ENCODE measurements at regions of chr4 and their contacts with region 1.

Region 1: DNA sequence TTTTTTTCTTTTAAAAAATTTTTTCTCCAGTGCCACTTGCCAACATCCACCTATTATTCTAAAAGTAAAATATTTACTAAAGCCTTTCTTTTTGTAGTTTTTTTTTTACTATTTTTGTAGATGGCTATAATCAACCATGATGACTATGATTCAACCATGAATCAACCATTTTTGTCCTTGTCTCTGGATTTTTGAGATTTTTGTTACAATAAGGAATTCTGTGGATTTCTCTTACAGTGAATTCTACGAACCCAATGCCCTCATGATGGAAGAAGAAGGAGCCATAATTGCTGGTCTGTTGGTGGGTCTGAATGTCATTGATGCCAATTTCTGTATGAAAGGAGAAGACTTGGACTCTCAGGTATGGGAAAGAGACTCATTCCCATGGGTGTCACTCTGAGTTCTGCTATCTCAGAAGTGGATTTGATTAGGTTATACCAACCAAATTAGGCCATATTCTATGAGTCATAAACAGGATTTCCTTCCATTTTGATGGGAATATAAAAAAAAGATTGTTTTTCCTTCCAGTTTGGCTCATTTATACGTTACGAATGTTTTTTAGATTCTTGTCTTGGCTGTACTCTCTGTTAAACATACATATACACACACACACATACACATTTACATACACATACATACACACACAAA is 46.7 kb downstream of the RUFY3 start:
- DNase-seq: no peak
- H3K4me3 ChIP-seq: no peak overlapping the region
- H3K27ac ChIP-seq: peak overlapping the region in 1 of 5 donors; percentile 12
- H3K4me1 ChIP-seq: peaks cover 6 to 10% of the 10 kb centered on the region in 2 donors
- H3K27me3 ChIP-seq: no peaks in the 10 kb centered on the region
- CTCF ChIP-seq: no peak
- POLR2A ChIP-seq: no peak

Region 2: DNA sequence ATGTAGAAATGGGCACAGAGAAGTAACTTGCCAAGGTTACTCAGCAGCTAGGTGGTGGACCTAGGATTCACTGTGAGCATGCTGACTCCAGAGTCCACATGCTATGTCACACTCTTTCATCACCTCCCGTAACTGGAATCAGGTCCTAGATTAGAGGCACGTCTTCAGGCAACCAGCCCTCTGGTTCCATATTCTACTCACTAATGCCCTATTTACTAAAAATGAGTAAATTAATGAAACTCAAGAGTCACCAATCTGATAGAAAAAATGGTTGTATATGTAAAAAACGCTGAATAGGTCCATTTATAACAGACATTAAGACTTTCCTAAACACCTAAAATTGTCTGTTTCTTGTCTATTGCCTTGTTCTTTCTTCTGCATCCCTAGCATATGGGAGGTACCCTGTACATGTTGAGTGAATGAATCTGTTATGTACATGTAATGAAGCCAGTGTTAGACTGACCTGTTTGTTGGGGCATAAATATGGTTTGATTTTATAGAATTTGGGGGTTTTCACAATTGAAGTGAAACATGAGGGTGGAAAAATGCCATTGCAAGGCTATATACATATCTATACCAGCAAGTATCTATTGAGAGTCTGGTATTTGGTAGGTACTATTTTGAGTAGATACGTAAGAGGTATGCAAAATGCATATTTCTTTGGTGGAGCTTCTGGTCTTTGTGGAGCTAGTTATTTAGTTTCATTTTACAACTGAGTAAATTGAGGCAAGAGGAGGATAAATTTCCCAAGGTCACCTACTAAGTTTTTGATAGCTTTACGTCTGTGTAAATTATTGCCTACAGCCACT is 54.1 kb before region 1 on chr4:
- intact Hi-C with region 1: loop called in 1 of 2 experiments (anchors 10 kb)
- DNase-seq: peak in 4 of 7 donors; percentile 37 to 59 (median 53)
- H3K4me3 ChIP-seq: no peak overlapping the region
- H3K27ac ChIP-seq: peak overlapping the region in 4 of 5 donors; percentile 13 to 59 (median 39)
- H3K4me1 ChIP-seq: peaks cover 27 to 49% of the 10 kb centered on the region in 2 donors
- H3K27me3 ChIP-seq: no peaks in the 10 kb centered on the region
- CTCF ChIP-seq: no peak
- POLR2A ChIP-seq: no peak